ENCODE measurements at regions of chr6 and their contacts with region 1.

Region 1: GRCh38 chr6:44265007-44265721 is at the start of gene NFKBIE:
- DNase-seq: peak; percentile 85
- ATAC-seq: peak; percentile 86
- H3K4me3 ChIP-seq: peak within 1 kb of the TSS; percentile 64 to 95 (median 76)
- H3K27ac ChIP-seq: peak within 1 kb of the TSS; percentile 67
- H3K4me1 ChIP-seq: peaks cover 40% of the 10 kb centered on the region
- H3K27me3 ChIP-seq: peaks cover 5 to 20% of the 10 kb centered on the region in 2 experiments; a peak in 4 of 5 replicates
- CTCF ChIP-seq: peak; percentile 94
- EP300 ChIP-seq: no peak
- POLR2A ChIP-seq: peak in 1 of 2 experiments; percentile 82; a peak in 2 of 4 replicates
- RAD21 ChIP-seq: no peak; the same call in 1 of the 2 replicates
- total RNA-seq, gene NFKBIE: 14.5 and 15.0 TPM in 2 replicates

Region 2: GRCh38 chr6:43977404-43978111 is 287.6 kb before region 1 on chr6:
- CTCF ChIA-PET with region 1: no interaction called
- POLR2A ChIA-PET with region 1: no interaction called
- in situ Hi-C with region 1: no loop called
- intact Hi-C with region 1: no loop called
- DNase-seq: no peak
- ATAC-seq: peak; percentile 15; the same call in 1 of the 3 replicates
- H3K4me3 ChIP-seq: peak overlapping the region in 1 of 3 experiments; percentile 37; a peak in 1 of 6 replicates
- H3K27ac ChIP-seq: no peak overlapping the region
- H3K4me1 ChIP-seq: peaks cover 49% of the 10 kb centered on the region
- H3K27me3 ChIP-seq: peaks cover 13 to 71% of the 10 kb centered on the region in 2 experiments; a peak in 4 of 5 replicates
- CTCF ChIP-seq: no peak
- EP300 ChIP-seq: no peak
- POLR2A ChIP-seq: no peak
- RAD21 ChIP-seq: no peak

Region 3: DNA sequence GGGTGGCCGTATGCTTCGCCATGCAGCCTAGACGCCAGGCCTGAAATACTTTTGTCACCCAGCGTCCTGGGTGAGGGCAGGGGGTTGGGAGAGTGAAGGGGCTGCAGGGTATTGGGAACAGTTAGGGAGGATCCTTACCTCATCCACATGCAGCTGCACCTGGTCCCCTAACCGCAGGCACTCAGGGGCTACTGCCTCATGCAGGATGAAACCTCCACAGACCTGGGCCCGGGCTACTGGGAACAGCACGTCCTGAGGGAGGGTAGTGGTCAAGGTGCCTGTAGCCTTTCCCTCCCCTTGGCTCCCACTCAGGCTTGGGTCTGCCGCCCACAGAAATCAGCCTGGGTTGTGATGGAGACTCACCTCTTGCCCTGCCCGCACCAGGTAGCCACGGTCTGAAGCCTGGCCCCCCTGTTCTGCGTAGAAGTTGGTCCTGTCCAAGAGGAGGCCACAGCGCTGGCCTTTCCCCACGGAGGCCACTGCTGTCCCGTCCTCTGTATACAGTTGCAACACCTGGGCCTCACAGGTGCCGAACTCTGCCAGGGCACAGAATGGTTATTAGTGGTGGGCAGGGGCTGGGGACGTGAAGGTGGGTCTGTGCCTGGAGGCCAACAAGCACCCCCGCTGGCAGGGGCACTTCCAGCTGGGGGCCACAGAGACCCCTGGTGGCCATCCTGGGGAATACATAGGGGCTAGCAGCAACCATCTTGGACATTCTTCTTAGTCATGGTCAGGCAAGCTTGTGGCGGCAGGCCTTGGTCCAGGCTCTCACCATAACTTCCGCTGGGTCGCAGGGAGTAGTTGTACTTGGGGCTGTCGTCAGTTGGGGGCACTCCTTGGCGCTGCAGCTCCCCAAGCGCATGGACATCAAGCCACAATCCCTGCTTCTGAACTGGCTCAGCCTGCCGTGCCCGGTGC is 39.4 kb after region 1 on chr6:
- CTCF ChIA-PET with region 1: interaction called, 37 read pairs
- POLR2A ChIA-PET with region 1: interaction called, 7 read pairs
- in situ Hi-C with region 1: no loop called
- intact Hi-C with region 1: loop called (anchors 1 kb)
- DNase-seq: peak; percentile 44
- ATAC-seq: peak; percentile 77
- H3K4me3 ChIP-seq: no peak overlapping the region
- H3K27ac ChIP-seq: no peak overlapping the region
- H3K4me1 ChIP-seq: no peaks in the 10 kb centered on the region
- H3K27me3 ChIP-seq: no peaks in the 10 kb centered on the region
- CTCF ChIP-seq: peak; percentile 93
- EP300 ChIP-seq: no peak
- POLR2A ChIP-seq: no peak
- RAD21 ChIP-seq: peak; percentile 47

Region 4: GRCh38 chr6:44312901-44313788 is 48.0 kb after region 1 on chr6 and contains the start of gene AARS2:
- CTCF ChIA-PET with region 1: no interaction called
- POLR2A ChIA-PET with region 1: interaction called, 3 read pairs
- in situ Hi-C with region 1: loop called (anchors 5 kb)
- intact Hi-C with region 1: no loop called
- DNase-seq: peak; percentile 87
- ATAC-seq: peak; percentile 96
- H3K4me3 ChIP-seq: peak within 1 kb of the TSS; percentile 92 to 97 (median 96)
- H3K27ac ChIP-seq: peak within 1 kb of the TSS; percentile 58
- H3K4me1 ChIP-seq: peaks cover 22% of the 10 kb centered on the region
- H3K27me3 ChIP-seq: peaks cover 0 to 17% of the 10 kb centered on the region in 2 experiments; a peak in 2 of 5 replicates
- CTCF ChIP-seq: peak; percentile 99
- EP300 ChIP-seq: peak; percentile 51 to 71; a peak in 2 of 4 replicates
- POLR2A ChIP-seq: peak; percentile 94 to 99
- RAD21 ChIP-seq: peak; percentile 69
- total RNA-seq, gene AARS2: 13.7 and 24.1 TPM in 2 replicates

Region 5: GRCh38 chr6:44338228-44339122 is 73.3 kb after region 1 on chr6:
- CTCF ChIA-PET with region 1: interaction called, 65 read pairs
- POLR2A ChIA-PET with region 1: no interaction called
- in situ Hi-C with region 1: loop called (anchors 5 kb)
- intact Hi-C with region 1: loop called (anchors 1 kb)
- DNase-seq: peak; percentile 72
- ATAC-seq: peak; percentile 89
- H3K4me3 ChIP-seq: no peak overlapping the region
- H3K27ac ChIP-seq: no peak overlapping the region
- H3K4me1 ChIP-seq: no peaks in the 10 kb centered on the region
- H3K27me3 ChIP-seq: peaks cover 0 to 56% of the 10 kb centered on the region in 2 experiments; a peak in 4 of 5 replicates
- CTCF ChIP-seq: peak; percentile 94
- EP300 ChIP-seq: no peak
- POLR2A ChIP-seq: no peak
- RAD21 ChIP-seq: peak; percentile 87

Measured in HepG2 (cell line).